GM10248 (cell line): ENCODE measurements at regions of chr5 and their contacts with region 1.

Region 1: DNA sequence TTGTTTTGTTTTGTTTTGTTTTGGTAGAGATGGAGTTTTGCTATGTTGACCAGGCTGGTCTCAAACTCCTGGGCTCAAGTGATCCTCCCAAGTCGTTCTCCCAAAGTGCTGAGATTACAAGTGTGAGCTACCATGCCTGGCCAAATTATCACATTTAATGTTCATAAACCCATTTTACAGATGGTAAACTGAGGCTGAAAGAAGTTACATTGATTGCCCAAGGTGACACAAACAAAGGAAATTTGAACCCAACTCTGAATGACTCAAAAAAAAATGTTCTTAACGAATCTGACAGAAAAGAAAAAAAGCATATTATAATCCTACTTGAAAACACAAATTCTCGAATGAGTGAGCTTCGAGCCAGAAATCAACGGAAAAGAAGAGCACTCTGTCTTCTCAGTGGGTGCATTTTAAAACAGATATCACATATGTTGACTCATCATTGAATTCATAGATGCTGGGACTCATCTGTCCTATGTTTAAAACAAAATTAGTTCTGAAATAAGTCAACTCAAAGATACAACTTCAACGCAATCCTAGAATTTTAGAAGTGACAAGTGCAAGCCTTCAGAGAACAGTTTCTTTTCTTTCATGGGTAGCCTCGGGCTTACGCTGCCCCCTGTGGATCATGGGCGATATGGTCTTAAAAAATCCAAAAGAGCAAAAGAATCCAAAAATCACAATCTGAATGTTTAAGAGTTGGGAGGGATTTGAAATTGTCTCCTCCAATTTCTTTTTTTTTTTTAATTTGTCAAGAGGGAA is 28.4 kb downstream of the TIMD4 start:
- DNase-seq: peak; percentile 35
- CTCF ChIP-seq: peak; percentile 64

Region 2: GRCh38 chr5:156913719-156914370 is 20.8 kb before region 1 on chr5:
- CTCF ChIA-PET with region 1: interaction called, 23 read pairs
- POLR2A ChIA-PET with region 1: no interaction called
- DNase-seq: peak; percentile 61
- CTCF ChIP-seq: no peak

Region 3: GRCh38 chr5:157006262-157006661 is 71.6 kb after region 1 on chr5:
- CTCF ChIA-PET with region 1: no interaction called
- POLR2A ChIA-PET with region 1: no interaction called
- DNase-seq: no peak
- CTCF ChIP-seq: no peak

Region 4: GRCh38 chr5:157354800-157355199 is 420.2 kb after region 1 on chr5:
- CTCF ChIA-PET with region 1: no interaction called
- POLR2A ChIA-PET with region 1: no interaction called
- DNase-seq: no peak
- CTCF ChIP-seq: peak; percentile 24